ENCODE measurements at regions of chr2 and their contacts with region 1.

Region 1: DNA sequence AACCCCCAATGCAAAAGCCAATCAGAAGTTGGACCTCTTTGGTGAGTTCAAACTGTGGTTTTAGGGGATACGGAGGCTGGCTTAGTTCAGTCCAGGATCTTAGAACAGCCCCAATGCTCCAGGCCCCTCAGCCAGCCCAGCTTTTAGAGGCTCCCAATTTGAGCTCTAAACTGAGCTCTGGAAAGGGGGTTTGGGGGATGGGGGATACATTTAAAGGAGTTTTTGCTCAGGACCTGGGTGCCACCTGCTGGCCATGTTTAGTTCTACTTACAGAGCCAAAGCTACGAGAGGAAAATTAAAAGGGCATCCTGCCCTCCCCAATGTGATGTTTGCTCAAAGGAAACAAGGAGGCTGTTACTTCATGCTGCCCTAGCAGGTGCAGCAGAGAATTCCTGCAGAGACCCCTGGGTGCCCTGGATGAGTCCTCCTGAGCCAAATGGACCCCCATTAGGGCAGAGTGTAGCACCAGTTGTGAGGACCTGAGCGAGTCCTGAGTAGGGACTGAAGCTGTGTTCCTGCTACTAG is 15.9 kb upstream of the TMEM214 start:
- DNase-seq: peak; percentile 76
- ATAC-seq: peak; percentile 42
- H3K4me3 ChIP-seq: no peak overlapping the region
- H3K27ac ChIP-seq: no peak overlapping the region
- H3K4me1 ChIP-seq: peaks cover 48% of the 10 kb centered on the region
- H3K27me3 ChIP-seq: no peaks in the 10 kb centered on the region
- CTCF ChIP-seq: peak; percentile 81
- EP300 ChIP-seq: no peak
- POLR2A ChIP-seq: no peak
- RAD21 ChIP-seq: peak; percentile 86

Region 2: DNA sequence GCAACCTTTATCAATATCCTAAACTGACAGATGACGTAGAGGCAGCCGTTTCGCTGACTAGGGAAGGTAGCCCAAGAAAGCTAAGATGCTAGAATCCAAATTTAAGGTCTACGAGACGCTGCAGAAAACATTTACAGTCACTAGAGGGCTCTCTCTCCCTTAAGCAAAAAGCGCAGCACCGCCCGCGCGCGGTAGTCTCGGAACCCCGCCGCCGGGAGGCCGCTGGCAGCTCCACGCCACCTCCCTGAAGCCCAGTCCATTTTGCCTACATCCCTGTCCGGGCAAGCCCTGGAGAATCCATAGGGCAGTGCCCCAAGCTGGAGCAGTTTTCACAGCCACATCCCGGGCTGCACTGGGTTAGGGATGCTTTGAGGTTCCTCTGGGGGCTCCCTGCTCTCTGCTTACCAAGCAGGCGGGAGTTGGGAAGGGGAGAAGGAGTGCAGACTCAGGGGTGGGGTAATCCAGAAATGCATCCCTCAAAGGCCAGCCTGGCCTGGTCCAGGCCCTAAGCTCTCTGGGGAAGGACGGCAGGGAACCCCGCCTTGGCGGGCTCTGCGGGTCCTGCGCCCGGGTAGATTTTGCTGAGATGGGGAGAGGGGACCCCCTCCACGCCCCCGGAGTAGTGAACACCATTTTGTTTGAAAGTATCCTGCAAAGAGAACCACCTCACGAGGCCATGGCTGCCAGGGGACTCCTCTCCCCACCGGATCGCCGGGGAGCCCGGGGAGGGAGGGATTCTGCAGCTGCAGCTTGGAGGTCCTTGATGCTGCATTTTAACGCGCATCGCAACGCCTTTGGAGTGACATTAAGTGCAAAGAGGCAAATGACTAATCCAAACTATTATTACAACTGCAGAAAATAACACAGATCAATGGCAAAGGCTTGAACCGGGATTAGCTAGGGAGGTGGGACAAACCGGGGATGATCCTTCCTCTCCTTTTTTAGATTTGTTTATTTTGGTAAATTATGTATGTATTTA is 170.2 kb before region 1 on chr2:
- CTCF ChIA-PET with region 1: interaction called, 16 read pairs
- POLR2A ChIA-PET with region 1: no interaction called
- in situ Hi-C with region 1: loop called (anchors 5 kb)
- intact Hi-C with region 1: loop called (anchors 1 kb)
- DNase-seq: peak; percentile 61
- ATAC-seq: peak; percentile 76
- H3K4me3 ChIP-seq: 0 out of 6 replicates have a peak overlapping the region, but pooled peaks of 2 of the 3 experiments have one; percentile 11 to 29
- H3K27ac ChIP-seq: no peak overlapping the region
- H3K4me1 ChIP-seq: peaks cover 13% of the 10 kb centered on the region
- H3K27me3 ChIP-seq: peaks cover 21 to 81% of the 10 kb centered on the region in 2 experiments
- CTCF ChIP-seq: peak; percentile 92
- EP300 ChIP-seq: no peak
- POLR2A ChIP-seq: no peak
- RAD21 ChIP-seq: peak; percentile 96

Region 3: GRCh38 chr2:26959331-26959730 is 57.5 kb before region 1 on chr2:
- CTCF ChIA-PET with region 1: interaction called, 91 read pairs
- POLR2A ChIA-PET with region 1: interaction called, 4 read pairs
- in situ Hi-C with region 1: loop called (anchors 5 kb)
- intact Hi-C with region 1: loop called (anchors 1 kb)
- DNase-seq: no peak
- ATAC-seq: no peak
- H3K4me3 ChIP-seq: no peak overlapping the region
- H3K27ac ChIP-seq: no peak overlapping the region
- H3K4me1 ChIP-seq: no peaks in the 10 kb centered on the region
- H3K27me3 ChIP-seq: peaks cover 4 to 54% of the 10 kb centered on the region in 2 experiments; a peak in 4 of 5 replicates
- CTCF ChIP-seq: no peak
- EP300 ChIP-seq: no peak
- POLR2A ChIP-seq: no peak
- RAD21 ChIP-seq: no peak

Region 4: GRCh38 chr2:26968001-26968400 is 48.9 kb before region 1 on chr2:
- CTCF ChIA-PET with region 1: interaction called, 91 read pairs
- POLR2A ChIA-PET with region 1: no interaction called
- in situ Hi-C with region 1: loop called (anchors 5 kb)
- intact Hi-C with region 1: no loop called
- DNase-seq: no peak
- ATAC-seq: no peak
- H3K4me3 ChIP-seq: no peak overlapping the region
- H3K27ac ChIP-seq: no peak overlapping the region
- H3K4me1 ChIP-seq: peaks cover 13% of the 10 kb centered on the region
- H3K27me3 ChIP-seq: peaks cover 0 to 41% of the 10 kb centered on the region in 2 experiments; a peak in 4 of 5 replicates
- CTCF ChIP-seq: no peak
- EP300 ChIP-seq: no peak
- POLR2A ChIP-seq: no peak
- RAD21 ChIP-seq: no peak

Region 5: DNA sequence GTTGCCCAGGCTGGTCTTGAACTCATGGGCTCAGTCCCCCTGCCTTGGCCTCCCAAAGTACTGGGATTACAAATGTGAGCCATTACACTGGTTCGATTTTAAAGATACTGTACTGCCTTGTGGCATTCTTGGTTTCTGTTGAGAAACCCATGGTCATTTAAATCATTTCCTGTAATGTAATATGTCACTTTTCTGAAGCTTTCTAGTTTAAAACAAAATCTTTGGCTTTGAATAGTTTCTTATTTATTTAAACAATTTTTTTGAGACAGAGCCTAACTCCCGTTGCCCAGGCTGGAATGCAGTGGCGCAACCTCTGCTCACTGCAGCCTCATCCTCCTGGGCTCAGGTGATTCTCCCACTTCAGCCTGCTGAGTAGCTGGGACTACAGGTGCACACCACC is 574.9 kb after region 1 on chr2:
- CTCF ChIA-PET with region 1: no interaction called
- POLR2A ChIA-PET with region 1: no interaction called
- in situ Hi-C with region 1: no loop called
- intact Hi-C with region 1: no loop called
- DNase-seq: no peak
- ATAC-seq: no peak; the same call in 2 of the 3 replicates
- H3K4me3 ChIP-seq: no peak overlapping the region
- H3K27ac ChIP-seq: no peak overlapping the region
- H3K4me1 ChIP-seq: peaks cover 32% of the 10 kb centered on the region
- H3K27me3 ChIP-seq: no peaks in the 10 kb centered on the region
- CTCF ChIP-seq: no peak
- EP300 ChIP-seq: no peak
- POLR2A ChIP-seq: no peak
- RAD21 ChIP-seq: no peak